ENCODE measurements at regions of chrX and their contacts with region 1.

Region 1: DNA sequence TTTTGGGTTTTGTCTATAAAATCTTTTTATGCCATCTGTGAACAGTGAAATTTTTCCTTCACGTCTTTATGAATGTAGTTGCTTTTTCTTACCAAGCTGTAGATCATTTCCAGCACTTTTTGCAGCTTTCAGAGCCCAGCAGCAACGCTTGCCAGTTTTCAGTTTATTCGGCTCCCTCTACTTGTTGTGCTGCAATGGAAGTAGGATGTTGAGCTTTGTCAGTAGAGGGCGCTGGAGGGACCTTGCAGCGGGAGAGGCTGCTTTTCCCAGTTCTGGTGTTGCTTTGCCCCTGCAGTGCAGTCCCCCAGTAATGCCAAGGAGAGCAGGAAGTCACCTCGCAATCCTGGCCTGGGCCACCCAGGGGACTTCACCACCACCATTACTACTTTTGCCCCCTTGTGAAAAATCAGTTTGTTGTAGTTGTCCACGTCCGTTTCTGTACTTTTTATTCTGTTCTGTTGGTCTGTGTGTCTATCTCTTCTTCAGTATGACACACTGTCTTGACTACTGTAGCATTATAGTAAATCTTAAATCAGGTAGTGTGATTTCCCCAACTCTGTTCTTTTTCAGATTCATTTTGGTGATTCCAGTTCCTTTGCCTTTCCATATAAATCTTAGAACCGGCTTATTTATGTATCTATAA is 21.8 kb downstream of the CMC4 start:
- DNase-seq: peak in 8 of 9 experiments; percentile 12 to 70 (median 54)
- ATAC-seq: peak; percentile 68
- H3K4me3 ChIP-seq: no peak overlapping the region
- H3K4me3 Mint-ChIP-seq: no peak overlapping the region
- H3K27ac ChIP-seq: no peak overlapping the region
- H3K27ac Mint-ChIP-seq: peak overlapping the region; percentile 55
- H3K4me1 ChIP-seq: no peaks in the 10 kb centered on the region
- H3K4me1 Mint-ChIP-seq: peaks cover 31% of the 10 kb centered on the region
- H3K27me3 ChIP-seq: no peaks in the 10 kb centered on the region
- H3K27me3 Mint-ChIP-seq: no peaks in the 10 kb centered on the region
- CTCF ChIP-seq: peak; percentile 50

Region 2: GRCh38 chrX:155009994-155010472 is 39.1 kb before region 1 on chrX:
- CTCF ChIA-PET with region 1: no interaction called
- POLR2A ChIA-PET with region 1: no interaction called
- intact Hi-C with region 1: no loop called
- DNase-seq: no peak
- ATAC-seq: no peak
- H3K4me3 ChIP-seq: no peak overlapping the region
- H3K4me3 Mint-ChIP-seq: no peak overlapping the region
- H3K27ac ChIP-seq: no peak overlapping the region
- H3K27ac Mint-ChIP-seq: no peak overlapping the region
- H3K4me1 ChIP-seq: no peaks in the 10 kb centered on the region
- H3K4me1 Mint-ChIP-seq: no peaks in the 10 kb centered on the region
- H3K27me3 ChIP-seq: no peaks in the 10 kb centered on the region
- H3K27me3 Mint-ChIP-seq: no peaks in the 10 kb centered on the region
- CTCF ChIP-seq: no peak

Region 3: DNA sequence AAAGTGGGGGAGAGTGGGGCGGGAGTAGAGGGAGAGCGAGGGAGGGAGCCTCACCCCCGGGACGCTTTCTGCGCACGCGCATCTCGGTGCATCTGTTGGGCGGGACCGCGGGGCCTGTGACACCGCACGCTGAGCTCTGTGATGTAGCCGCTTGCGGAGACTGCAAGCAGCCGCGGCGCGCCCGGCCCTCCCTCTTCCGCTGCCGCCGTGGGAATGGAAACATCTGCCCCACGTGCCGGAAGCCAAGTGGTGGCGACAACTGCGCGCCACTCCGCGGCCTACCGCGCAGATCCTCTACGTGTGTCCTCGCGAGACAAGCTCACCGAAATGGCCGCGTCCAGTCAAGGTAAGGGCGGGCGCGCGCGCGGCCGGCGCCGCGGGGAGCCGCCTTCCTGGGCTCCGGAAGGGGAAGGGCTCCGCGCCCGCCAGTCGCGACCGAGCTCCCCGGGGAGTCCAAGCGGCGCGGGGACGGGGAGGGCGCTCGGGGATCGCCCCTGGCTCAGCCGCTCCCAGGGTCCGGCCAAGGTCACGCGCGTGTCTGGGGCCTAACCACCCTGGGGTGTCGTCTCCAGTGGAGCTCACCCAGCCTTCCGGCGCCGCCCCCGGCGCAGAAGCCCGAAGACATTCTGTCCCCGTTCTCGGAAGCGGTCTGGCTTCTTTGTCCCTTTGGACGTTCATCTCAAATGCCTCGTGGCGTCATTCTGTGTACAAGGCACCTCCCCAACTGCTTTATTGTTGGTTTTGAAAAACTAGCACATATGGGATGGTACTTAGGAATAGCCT is 22.2 kb before region 1 on chrX and contains the start of gene FUNDC2:
- CTCF ChIA-PET with region 1: interaction called, 4 read pairs
- POLR2A ChIA-PET with region 1: interaction called, 7 read pairs
- intact Hi-C with region 1: loop called in 1 of 2 experiments (anchors 2 kb)
- DNase-seq: peak; percentile 87 to 97 (median 92)
- ATAC-seq: peak; percentile 85
- H3K4me3 ChIP-seq: peak within 1 kb of the TSS; percentile 73 to 76
- H3K4me3 Mint-ChIP-seq: peak within 1 kb of the TSS; percentile 88
- H3K27ac ChIP-seq: peak within 1 kb of the TSS; percentile 96 to 98
- H3K27ac Mint-ChIP-seq: peak within 1 kb of the TSS; percentile 96
- H3K4me1 ChIP-seq: no peaks in the 10 kb centered on the region
- H3K4me1 Mint-ChIP-seq: peaks cover 27% of the 10 kb centered on the region
- H3K27me3 ChIP-seq: no peaks in the 10 kb centered on the region
- H3K27me3 Mint-ChIP-seq: no peaks in the 10 kb centered on the region
- CTCF ChIP-seq: no peak
- total RNA-seq, gene FUNDC2: 46.5 to 50.8 TPM

Region 4: GRCh38 chrX:155035688-155036087 is 13.4 kb before region 1 on chrX:
- CTCF ChIA-PET with region 1: no interaction called
- POLR2A ChIA-PET with region 1: no interaction called
- intact Hi-C with region 1: loop called in 1 of 2 experiments (anchors 2 kb)
- DNase-seq: no peak
- ATAC-seq: no peak
- H3K4me3 ChIP-seq: no peak overlapping the region
- H3K4me3 Mint-ChIP-seq: no peak overlapping the region
- H3K27ac ChIP-seq: no peak overlapping the region
- H3K27ac Mint-ChIP-seq: no peak overlapping the region
- H3K4me1 ChIP-seq: no peaks in the 10 kb centered on the region
- H3K4me1 Mint-ChIP-seq: peaks cover 38% of the 10 kb centered on the region
- H3K27me3 ChIP-seq: no peaks in the 10 kb centered on the region
- H3K27me3 Mint-ChIP-seq: no peaks in the 10 kb centered on the region
- CTCF ChIP-seq: no peak

Measured in CD8-positive, alpha-beta T cell (primary cell).